AG04449 (cell line): ENCODE measurements at regions of chr16 and their contacts with region 1.

Region 1: DNA sequence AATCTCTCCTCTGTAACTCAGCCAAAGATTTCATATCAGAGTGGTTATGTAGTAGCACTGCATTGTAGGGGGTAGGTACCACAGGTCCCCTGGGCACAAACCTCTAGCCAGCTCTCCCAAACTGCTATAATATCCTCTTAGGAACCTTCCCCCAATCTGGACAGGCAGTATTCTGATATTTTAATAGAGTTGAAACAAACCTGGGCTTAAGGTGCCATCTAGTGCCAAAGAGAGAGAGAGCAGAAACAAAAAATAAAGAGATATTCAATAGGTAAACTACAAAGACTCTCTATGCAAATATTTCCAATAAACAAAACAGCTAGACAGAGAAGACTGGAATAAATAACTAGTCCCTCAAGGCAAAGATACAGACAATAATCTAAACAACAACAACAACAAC is 1070.0 kb downstream of the CDH11 start:
- DNase-seq: no peak
- H3K4me3 ChIP-seq: no peak overlapping the region
- CTCF ChIP-seq: no peak

Region 2: DNA sequence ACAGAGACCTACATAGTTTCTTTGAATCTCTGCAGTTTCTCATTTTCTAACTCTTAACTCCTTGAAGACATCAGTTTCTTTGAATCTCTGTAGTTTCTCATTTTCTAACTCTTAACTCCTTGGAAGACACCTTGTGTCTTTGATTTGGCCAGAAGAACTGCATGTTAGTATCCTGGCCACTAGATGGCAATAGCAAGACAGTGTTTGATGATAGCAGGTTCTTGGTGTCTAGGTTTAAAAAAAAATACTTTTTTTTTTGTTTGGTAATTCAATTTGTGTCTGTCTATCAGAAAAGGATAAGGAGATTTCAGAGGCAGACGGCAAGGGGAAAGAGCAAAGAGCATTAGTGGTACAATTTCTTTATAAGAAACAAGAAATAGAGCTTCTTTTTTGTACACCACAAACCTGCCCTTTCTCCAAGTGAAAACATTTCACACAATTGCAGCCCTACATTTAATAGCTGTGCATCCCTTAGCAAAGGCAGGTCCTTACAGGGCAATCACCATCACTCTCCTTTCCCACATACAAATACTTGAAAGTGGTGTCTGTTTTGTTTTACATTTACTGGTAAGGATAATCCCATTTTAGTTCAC is 690.7 kb before region 1 on chr16:
- CTCF ChIA-PET with region 1: interaction called, 10 read pairs
- POLR2A ChIA-PET with region 1: no interaction called
- DNase-seq: peak; percentile 14
- H3K4me3 ChIP-seq: no peak overlapping the region
- CTCF ChIP-seq: peak; percentile 70

Region 3: DNA sequence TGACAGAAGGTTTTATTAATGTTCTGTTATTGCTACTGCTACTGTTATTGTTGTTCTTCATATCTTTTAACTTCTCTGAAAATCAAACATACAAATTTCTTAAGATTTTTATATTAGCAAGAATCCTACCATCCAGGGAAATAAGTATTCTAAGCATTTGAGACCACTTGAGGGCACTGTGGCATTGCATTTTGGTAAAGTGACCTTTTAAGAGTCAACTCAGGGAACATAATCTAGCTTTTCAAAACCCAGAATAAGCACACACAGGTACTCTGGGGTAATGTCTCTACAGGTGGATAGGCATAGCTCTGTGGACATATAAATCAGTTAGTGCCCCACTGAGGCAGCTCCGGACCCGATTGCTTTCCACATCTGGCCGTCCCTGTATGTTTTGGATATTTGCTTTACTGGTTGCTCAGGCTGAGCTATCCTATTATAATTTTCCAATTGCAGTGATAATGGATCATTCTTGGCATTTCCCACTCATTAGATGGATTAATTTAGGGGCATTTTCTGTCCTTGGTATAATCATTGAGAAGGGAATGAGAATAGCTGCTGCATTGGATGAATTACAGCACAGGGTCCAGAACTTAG is 590.5 kb before region 1 on chr16:
- CTCF ChIA-PET with region 1: interaction called, 39 read pairs
- POLR2A ChIA-PET with region 1: no interaction called
- DNase-seq: peak; percentile 4
- H3K4me3 ChIP-seq: no peak overlapping the region
- CTCF ChIP-seq: peak; percentile 18